AG04449 (cell line): ENCODE measurements at regions of chr3 and their contacts with region 1.

Region 1: DNA sequence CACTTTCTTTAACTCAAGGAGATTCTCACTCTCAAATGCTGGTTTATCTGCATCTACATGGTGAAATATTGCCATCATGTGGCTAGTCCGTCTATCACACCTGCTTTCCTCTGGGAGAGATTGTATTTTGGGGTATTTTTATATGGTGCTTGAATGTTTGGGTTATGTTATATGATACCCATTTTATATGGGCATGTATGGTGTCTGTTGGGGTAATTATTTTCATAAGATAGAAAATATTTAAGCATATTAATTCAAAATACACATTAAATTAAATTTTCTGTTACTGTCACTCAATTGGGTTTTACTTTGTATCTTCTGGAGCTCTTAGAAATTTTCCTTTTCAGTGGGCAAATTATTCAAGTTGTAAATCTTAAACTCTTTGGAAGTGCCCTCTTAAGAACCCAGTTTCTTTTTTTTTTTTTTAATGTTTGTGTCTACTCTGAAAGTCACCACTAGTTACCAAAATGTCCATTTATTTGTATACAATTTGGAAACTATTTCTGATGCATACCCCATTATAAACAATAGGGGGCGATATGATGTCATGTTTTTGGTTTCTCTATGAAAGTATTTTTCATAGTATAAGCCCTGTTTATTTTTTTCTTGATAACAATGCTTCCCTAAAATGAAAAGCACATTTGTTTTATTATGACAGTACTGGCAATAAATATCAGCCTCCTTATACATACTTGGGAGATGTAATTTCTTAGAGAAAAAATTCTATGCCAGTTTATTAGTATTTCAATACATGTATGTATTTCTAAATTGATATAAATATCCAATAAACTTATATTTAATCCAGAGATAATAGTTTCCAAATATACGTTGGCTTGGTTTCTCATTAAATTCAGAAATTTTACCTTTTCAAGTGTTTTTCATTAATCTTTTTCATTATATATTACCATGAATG is 36.1 kb upstream of the PLSCR5 start:
- DNase-seq: no peak
- H3K4me3 ChIP-seq: no peak overlapping the region
- CTCF ChIP-seq: peak; percentile 36

Region 2: DNA sequence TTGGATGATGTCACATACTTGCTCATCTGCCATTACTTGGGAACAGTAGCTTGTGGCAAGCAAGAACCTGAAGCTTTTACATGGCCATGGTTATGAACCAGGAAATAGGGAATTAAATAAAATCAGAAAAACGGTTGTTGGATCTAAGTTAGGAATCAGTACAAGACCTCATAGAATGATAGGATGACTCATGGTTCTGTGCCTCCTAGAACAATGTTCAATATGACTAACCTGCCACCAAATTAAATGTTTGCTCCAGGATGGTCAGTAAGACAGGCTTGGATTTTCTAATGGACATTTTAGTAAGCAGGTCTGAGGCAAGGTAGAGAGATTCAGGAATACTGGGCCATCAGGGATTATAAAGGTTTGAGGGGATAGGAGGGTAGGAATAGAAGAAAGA is 699.2 kb before region 1 on chr3:
- CTCF ChIA-PET with region 1: no interaction called
- POLR2A ChIA-PET with region 1: no interaction called
- DNase-seq: no peak
- H3K4me3 ChIP-seq: no peak overlapping the region
- CTCF ChIP-seq: no peak

Region 3: GRCh38 chr3:146421889-146422288 is 219.3 kb before region 1 on chr3:
- CTCF ChIA-PET with region 1: no interaction called
- POLR2A ChIA-PET with region 1: no interaction called
- DNase-seq: no peak
- H3K4me3 ChIP-seq: no peak overlapping the region
- CTCF ChIP-seq: no peak

Region 4: DNA sequence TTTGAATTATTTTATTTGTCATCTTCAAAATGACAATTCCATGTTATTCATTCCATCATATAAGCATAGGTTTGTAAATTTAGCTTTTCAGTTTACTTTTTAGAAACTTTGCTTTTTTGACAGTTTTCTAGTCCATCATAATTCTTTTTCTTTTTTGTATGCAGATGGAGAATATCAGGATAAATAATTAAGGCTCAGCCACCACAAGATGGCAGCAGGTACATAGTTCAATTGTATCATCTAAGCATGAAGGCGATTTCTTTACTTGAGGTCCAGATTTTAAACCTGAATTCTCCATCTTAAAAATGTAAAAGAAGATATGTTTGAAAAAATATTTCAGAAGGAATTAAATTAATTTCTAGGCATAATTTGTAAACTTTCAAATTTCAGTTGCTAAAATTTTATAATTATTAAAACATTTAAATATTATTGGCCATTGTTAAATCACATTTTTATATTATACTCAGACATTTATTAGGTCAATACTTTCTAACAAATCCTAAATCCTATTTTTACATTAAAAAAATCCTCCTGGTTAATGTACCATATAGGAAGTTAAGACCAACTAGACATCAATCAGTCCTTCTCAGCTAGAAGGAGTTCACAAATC is 51.2 kb before region 1 on chr3:
- CTCF ChIA-PET with region 1: interaction called, 41 read pairs
- POLR2A ChIA-PET with region 1: no interaction called
- DNase-seq: no peak
- H3K4me3 ChIP-seq: no peak overlapping the region
- CTCF ChIP-seq: peak; percentile 28

Region 5: DNA sequence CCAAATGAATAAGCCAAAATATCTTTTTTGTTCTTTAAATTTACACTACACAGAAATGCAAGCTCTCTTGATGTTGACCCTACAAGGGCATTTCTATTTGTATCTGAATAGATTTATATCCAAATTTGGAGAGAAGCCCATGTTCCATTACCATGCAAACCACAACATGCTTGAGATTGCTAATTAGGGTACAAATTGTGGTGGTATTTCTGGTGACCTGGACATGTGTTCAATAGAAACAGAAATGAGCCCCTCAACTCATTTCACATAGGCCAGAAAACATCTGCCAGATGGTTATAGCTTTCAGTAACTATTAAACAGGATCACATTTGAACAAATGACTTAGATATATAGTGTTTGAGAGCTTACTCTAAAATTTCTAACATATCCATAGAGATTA is 12.5 kb before region 1 on chr3:
- CTCF ChIA-PET with region 1: interaction called, 11 read pairs
- POLR2A ChIA-PET with region 1: no interaction called
- DNase-seq: no peak
- H3K4me3 ChIP-seq: no peak overlapping the region
- CTCF ChIP-seq: no peak

Region 6: DNA sequence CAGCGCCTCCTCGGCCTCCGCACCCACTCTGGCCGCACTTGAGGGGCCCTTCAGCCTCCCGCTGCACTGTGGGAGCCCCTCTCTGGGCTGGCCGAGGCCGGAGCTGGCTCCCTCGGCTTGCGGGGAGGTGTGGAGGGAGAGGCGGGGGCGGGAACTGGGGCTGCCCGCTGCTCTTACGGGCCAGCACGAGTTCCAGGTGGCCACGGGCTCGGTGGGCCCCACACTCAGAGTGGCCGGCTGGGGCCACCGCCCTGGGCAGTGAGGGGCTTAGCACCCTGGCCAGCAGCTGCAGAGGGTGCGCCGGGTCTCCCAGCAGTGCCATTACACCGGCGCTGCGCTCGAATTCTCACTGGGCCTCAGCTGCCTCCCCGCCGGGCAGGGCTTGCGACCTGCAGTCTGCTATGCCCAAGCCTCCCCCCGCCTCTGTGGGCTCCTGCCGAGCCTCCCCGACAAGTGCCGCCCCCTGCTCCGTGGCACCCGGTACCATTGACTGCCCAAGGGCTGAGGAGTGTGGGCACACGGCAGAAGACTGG is 131.1 kb after region 1 on chr3:
- CTCF ChIA-PET with region 1: no interaction called
- POLR2A ChIA-PET with region 1: no interaction called
- DNase-seq: no peak
- H3K4me3 ChIP-seq: no peak overlapping the region
- CTCF ChIP-seq: no peak